Activated CD4-positive, alpha-beta T cell treated with anti-CD3 and anti-CD28 coated beads, Interleukin-2, amount 10 ng/mL, durations not matched to agents 24 days and 14 days (primary cell): ENCODE measurements at regions of chr6 and their contacts with region 1.

Region 1: GRCh38 chr6:170572704-170573466 is 11.6 kb downstream of the PDCD2 start:
- DNase-seq: no peak
- H3K4me3 Mint-ChIP-seq: no peak overlapping the region
- H3K27ac Mint-ChIP-seq: peak overlapping the region; percentile 17
- H3K4me1 Mint-ChIP-seq: peaks cover 2% of the 10 kb centered on the region
- H3K27me3 Mint-ChIP-seq: no peaks in the 10 kb centered on the region

Region 2: DNA sequence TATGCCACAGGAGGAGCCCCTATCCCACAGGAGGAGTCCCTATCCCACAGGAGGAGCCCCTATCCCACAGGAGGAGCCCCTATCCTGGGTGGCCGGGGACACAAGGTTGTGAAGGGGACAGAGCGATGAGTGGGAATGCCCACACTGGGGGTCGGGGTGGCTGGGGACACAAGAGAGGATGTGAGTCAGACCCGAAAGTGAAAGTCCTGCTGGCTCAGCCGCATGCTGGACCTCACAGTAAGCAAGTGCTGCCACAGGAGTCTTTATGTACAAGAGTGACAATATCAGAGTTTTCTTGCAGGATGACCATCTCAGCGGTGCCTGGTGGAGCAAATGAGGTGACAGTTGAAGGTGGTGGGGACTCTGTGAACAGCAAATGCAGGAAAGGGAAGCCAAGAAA is 113.4 kb before region 1 on chr6:
- intact Hi-C with region 1: no loop called
- DNase-seq: peak; percentile 68
- H3K4me3 Mint-ChIP-seq: peak overlapping the region; percentile 9
- H3K27ac Mint-ChIP-seq: no peak overlapping the region
- H3K4me1 Mint-ChIP-seq: peaks cover 9% of the 10 kb centered on the region
- H3K27me3 Mint-ChIP-seq: peaks cover 4% of the 10 kb centered on the region

Region 3: DNA sequence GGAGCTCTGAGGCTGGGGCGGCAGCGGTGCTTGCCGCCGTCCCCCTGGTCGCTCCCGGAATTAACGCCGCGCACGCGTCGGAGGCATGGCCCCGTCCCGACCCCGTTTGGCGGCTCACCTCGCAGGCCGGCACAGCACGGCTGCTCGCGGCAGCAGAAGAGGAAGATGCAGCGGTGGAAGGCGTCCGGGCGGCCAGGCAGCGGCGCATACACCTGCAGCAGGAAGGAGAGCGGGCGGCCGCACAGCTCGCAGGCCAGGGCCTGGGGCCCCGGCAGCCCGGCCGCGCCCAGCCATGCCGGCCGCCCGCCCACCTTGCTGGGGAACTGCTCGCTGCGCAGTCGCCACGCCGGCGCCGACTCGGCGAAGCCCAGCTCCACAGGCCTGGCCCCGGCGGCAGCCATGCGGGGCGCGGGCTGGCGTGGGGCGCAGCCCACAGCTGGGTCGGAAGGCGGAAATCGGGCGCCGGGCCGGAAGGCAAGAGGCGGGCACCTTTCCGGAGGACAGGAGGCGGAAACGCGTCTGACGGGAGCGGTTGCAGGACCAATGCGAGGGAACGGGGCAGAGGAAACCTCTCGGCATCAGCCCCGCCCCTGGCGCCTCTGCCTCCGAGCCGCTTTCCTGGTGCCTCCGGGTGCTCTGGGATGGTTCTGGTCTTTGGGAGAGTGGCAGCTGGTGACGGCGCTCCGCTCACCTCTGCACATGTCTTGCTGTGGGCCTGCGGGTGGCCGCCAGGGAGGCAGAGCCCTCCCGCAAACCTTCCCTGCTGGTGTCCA is 11.5 kb after region 1 on chr6 and contains the start of gene PDCD2:
- intact Hi-C with region 1: loop called (anchors 2 kb)
- DNase-seq: peak; percentile 98
- H3K4me3 Mint-ChIP-seq: peak within 1 kb of the TSS; percentile 100
- H3K27ac Mint-ChIP-seq: peak within 1 kb of the TSS; percentile 97
- H3K4me1 Mint-ChIP-seq: peaks cover 24% of the 10 kb centered on the region
- H3K27me3 Mint-ChIP-seq: peaks cover 3% of the 10 kb centered on the region
- total RNA-seq, gene PDCD2: 138 and 139 TPM in 2 replicates